H1 (cell line): ENCODE measurements at regions of chr4 and their contacts with region 1.

Region 1: DNA sequence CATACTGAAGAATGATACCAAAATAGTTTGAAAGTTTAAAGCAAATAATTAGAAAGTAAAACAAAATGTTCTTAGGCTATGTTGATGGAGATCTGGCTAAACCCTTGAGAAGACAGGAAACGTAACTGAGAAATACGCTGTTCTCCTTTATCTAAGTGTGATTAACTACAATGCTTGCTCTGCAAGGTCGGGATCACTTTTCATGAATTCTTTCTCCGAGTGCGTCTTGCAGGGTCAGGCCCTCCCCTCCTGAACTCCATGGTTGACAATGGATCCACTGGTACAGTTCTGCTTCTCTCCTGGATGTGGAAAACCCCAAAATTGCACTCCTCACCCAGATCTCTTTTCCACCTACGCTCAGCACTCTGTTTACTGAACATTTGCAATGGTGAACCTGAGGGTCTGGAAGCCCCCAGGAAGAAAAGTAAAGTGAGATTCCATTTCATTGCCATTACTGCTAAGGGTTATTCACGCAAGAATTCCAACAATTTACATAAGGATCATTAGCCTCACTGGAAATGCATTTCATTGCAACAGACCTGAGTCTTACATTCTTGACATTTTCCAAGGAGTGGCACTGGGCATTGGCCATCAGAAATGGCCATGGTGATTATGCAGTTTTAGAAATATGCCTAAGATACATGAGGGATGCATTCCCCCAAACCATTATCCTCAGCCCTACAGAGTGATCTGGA is 24.6 kb upstream of the WWC2 start:
- DNase-seq: no peak
- H3K4me3 ChIP-seq: peak overlapping the region in 1 of 4 experiments; percentile 7; a peak in 1 of 8 replicates
- H3K27ac ChIP-seq: no peak overlapping the region
- H3K4me1 ChIP-seq: peaks cover 3 to 14% (median 7%) of the 10 kb centered on the region in 4 experiments; a peak in 5 of 7 replicates
- H3K27me3 ChIP-seq: no peaks in the 10 kb centered on the region
- CTCF ChIP-seq: no peak
- EP300 ChIP-seq: no peak
- POLR2A ChIP-seq: no peak
- RAD21 ChIP-seq: no peak

Region 2: DNA sequence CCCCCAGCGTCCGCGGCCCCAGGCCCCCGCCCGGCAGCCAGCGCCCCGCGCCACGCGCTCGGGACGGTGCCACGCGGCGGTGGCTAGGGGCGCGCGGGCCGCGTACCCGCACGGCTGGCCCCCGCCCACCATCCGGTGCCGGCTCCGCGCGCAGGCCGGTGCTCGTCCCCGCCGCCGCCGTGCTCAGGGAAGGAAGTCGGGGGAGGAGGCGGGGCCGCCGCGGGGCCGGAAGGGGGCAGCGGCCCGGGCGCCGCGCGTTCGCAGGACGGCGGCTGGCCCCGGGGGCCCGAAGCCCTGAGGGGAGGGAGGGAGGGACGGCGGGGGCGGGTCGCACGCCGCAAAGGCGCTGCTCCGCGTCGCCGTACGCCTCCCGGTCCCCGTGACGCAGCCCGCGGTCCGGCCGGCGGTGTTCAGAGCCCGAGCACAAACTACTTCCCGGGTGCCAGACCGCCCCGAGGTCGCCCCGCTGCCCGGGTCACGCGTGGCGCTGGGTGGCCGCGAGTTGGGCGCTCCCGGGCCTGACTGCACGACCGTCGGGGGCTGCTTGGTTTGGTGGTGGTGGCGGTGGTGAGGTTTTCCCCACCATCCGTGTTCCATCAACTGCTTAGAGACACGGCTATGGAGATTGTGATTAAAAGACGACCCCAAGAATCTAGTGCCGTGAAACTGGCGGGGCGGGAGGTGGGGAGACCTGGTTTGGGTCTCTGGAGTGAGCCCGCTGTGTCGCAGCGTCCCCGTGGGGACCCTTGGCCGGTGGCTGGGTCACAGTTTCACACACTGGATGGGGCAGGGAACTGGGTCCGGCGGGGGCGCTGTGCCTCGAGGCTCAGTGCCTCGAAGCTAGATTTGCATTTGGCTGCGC is 157.0 kb before region 1 on chr4 and contains the start of gene DCTD:
- CTCF ChIA-PET with region 1: no interaction called
- POLR2A ChIA-PET with region 1: no interaction called
- DNase-seq: peak in 1 of 2 experiments; percentile 74
- H3K4me3 ChIP-seq: peak within 1 kb of the TSS; percentile 42 to 74 (median 71)
- H3K27ac ChIP-seq: no peak within 1 kb of the TSS; the same call in 1 of the 2 replicates
- H3K4me1 ChIP-seq: peaks cover 2 to 7% (median 4%) of the 10 kb centered on the region in 4 experiments; a peak in 6 of 7 replicates
- H3K27me3 ChIP-seq: peaks cover 0 to 3% (median 0%) of the 10 kb centered on the region in 4 experiments; a peak in 3 of 7 replicates
- CTCF ChIP-seq: peak; percentile 31 to 49 (median 32)
- EP300 ChIP-seq: no peak
- POLR2A ChIP-seq: no peak; a peak in 1 of 3 replicates
- RAD21 ChIP-seq: no peak; a peak in 1 of 4 replicates
- total RNA-seq, gene DCTD: 69.4 and 69.5 TPM in 2 replicates

Region 3: DNA sequence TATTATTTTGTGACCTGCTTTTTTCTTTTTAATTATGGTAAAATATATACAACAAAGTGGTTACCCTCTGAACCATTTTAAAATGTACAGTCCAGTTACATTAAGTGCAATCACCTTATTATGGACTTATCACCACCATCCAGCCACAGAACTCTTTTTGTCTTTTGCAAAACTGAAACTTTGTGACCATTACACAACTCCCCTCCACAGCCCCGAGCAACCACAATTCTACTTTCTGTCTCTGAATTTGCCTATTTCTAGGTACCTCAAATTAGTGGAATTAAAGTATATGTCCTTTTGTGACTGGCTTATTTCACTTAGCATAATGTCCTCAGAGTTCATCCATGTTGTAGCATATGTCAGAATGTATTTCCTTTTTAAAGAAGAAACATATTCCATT is 14.6 kb before region 1 on chr4:
- CTCF ChIA-PET with region 1: interaction called, 21 read pairs
- POLR2A ChIA-PET with region 1: interaction called, 3 read pairs
- DNase-seq: no peak
- H3K4me3 ChIP-seq: no peak overlapping the region
- H3K27ac ChIP-seq: no peak overlapping the region
- H3K4me1 ChIP-seq: no peaks in the 10 kb centered on the region
- H3K27me3 ChIP-seq: no peaks in the 10 kb centered on the region
- CTCF ChIP-seq: no peak
- EP300 ChIP-seq: no peak
- POLR2A ChIP-seq: no peak
- RAD21 ChIP-seq: no peak

Region 4: GRCh38 chr4:183106839-183107238 is 32.4 kb after region 1 on chr4:
- CTCF ChIA-PET with region 1: interaction called, 13 read pairs
- POLR2A ChIA-PET with region 1: no interaction called
- DNase-seq: no peak
- H3K4me3 ChIP-seq: no peak overlapping the region
- H3K27ac ChIP-seq: no peak overlapping the region
- H3K4me1 ChIP-seq: peaks cover 2 to 32% (median 15%) of the 10 kb centered on the region in 4 experiments; a peak in 6 of 7 replicates
- H3K27me3 ChIP-seq: no peaks in the 10 kb centered on the region
- CTCF ChIP-seq: peak in 1 of 3 experiments; percentile 14; a peak in 2 of 4 replicates
- EP300 ChIP-seq: no peak
- POLR2A ChIP-seq: no peak
- RAD21 ChIP-seq: no peak

Region 5: GRCh38 chr4:183249857-183250256 is 175.4 kb after region 1 on chr4:
- CTCF ChIA-PET with region 1: interaction called, 65 read pairs
- POLR2A ChIA-PET with region 1: no interaction called
- DNase-seq: no peak
- H3K4me3 ChIP-seq: no peak overlapping the region
- H3K27ac ChIP-seq: no peak overlapping the region
- H3K4me1 ChIP-seq: no peaks in the 10 kb centered on the region
- H3K27me3 ChIP-seq: no peaks in the 10 kb centered on the region
- CTCF ChIP-seq: peak in 2 of 3 experiments; percentile 36 to 50; a peak in 2 of 4 replicates
- EP300 ChIP-seq: no peak
- POLR2A ChIP-seq: no peak
- RAD21 ChIP-seq: peak; percentile 74 to 76

Region 6: GRCh38 chr4:183256756-183257385 is 182.4 kb after region 1 on chr4:
- CTCF ChIA-PET with region 1: interaction called, 113 read pairs
- POLR2A ChIA-PET with region 1: interaction called, 4 read pairs
- DNase-seq: peak in 1 of 2 experiments; percentile 73
- H3K4me3 ChIP-seq: no peak overlapping the region
- H3K27ac ChIP-seq: no peak overlapping the region
- H3K4me1 ChIP-seq: peaks cover 0 to 4% (median 0%) of the 10 kb centered on the region in 4 experiments; a peak in 1 of 7 replicates
- H3K27me3 ChIP-seq: no peaks in the 10 kb centered on the region
- CTCF ChIP-seq: peak; percentile 84 to 89 (median 88)
- EP300 ChIP-seq: no peak
- POLR2A ChIP-seq: no peak
- RAD21 ChIP-seq: peak; percentile 77 to 78